IMR-90 (cell line): ENCODE measurements at regions of chr12 and their contacts with region 1.

Region 1: DNA sequence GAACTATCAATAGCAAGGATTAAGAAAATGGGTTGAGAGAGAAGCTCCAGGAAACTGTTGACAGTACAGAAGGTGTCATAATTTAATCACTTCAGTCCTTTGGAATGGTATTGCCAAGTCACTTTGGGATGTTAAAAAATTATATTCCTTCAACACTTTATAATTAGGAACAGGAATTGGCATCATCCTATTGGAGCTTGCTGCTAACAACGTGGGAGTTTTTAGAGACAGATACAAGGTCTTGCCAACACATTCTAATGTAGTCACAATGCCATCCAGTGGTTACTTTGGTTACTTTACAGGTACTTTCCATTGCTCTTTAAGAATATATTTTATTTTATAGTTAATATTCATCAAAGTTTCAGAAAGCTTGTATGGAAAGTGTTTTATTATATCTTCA is 310.1 kb downstream of the SYT1 start:
- DNase-seq: peak; percentile 77
- ATAC-seq: peak; percentile 75; the same call in 1 of the 2 replicates
- H3K4me3 ChIP-seq: no peak overlapping the region
- H3K27ac ChIP-seq: no peak overlapping the region
- H3K4me1 ChIP-seq: no peaks in the 10 kb centered on the region
- H3K27me3 ChIP-seq: no peaks in the 10 kb centered on the region
- CTCF ChIP-seq: peak; percentile 61
- POLR2A ChIP-seq: no peak
- RAD21 ChIP-seq: peak; percentile 68

Region 2: DNA sequence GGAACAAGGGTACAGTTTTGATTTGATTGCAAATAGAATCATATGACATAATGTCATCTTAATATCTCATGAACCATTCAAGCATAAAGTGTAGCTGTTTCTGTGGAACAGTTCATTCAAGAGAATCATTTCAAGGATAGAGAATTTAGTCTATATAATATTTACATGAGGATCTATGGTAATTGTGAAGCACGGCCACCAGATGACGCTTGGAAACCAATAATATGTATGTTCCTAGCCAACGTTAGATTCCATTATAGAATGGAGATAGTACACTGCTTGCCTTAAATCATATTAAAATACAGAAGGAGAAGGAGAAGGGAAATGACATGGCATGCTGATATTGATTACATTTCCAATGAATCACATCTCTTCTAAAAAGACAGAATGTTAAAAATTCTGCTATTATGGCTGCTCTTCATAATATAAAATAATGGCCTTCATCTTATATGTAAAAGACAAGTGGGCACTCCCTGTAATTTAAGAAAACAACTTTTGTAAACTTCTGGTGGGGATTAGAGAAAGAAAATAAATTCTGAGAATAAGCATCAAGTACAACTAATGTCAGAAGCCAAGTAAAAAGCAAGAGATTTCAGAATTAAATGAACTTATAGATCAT is 993.0 kb before region 1 on chr12:
- CTCF ChIA-PET with region 1: no interaction called
- POLR2A ChIA-PET with region 1: no interaction called
- dilution Hi-C with region 1: no loop called
- in situ Hi-C with region 1: loop called (anchors 10 kb)
- intact Hi-C with region 1: loop called (anchors 1 kb)
- DNase-seq: peak; percentile 48
- ATAC-seq: peak; percentile 63
- H3K4me3 ChIP-seq: no peak overlapping the region
- H3K27ac ChIP-seq: no peak overlapping the region
- H3K4me1 ChIP-seq: peaks cover 6% of the 10 kb centered on the region; the same call in 1 of the 2 replicates
- H3K27me3 ChIP-seq: no peaks in the 10 kb centered on the region
- CTCF ChIP-seq: peak; percentile 68
- POLR2A ChIP-seq: no peak
- RAD21 ChIP-seq: peak; percentile 69

Region 3: DNA sequence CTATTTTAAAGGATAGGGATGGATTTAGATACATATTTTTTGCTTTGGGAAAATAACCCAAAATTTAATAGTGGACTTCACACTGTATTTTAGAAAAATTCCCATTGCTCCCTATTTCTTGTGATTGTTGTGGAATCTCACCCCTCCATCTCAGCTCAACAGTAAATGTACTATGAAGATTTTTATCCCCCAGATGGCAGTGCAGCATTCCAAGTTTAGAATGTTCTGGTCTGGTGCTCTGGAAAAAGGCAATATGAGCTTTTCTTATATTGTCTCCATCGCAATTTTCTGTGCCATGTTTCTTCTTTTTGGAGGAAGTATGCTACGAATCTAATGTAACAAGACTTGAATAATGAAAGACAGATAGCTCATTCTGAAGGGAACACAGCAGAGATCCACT is 781.7 kb before region 1 on chr12:
- CTCF ChIA-PET with region 1: interaction called, 9 read pairs
- POLR2A ChIA-PET with region 1: no interaction called
- dilution Hi-C with region 1: no loop called
- in situ Hi-C with region 1: no loop called
- intact Hi-C with region 1: loop called (anchors 1 kb)
- DNase-seq: peak; percentile 30
- ATAC-seq: peak; percentile 63; the same call in 1 of the 2 replicates
- H3K4me3 ChIP-seq: no peak overlapping the region
- H3K27ac ChIP-seq: no peak overlapping the region
- H3K4me1 ChIP-seq: no peaks in the 10 kb centered on the region
- H3K27me3 ChIP-seq: no peaks in the 10 kb centered on the region; the same call in 1 of the 2 replicates
- CTCF ChIP-seq: peak; percentile 40
- POLR2A ChIP-seq: no peak
- RAD21 ChIP-seq: peak; percentile 53

Region 4: DNA sequence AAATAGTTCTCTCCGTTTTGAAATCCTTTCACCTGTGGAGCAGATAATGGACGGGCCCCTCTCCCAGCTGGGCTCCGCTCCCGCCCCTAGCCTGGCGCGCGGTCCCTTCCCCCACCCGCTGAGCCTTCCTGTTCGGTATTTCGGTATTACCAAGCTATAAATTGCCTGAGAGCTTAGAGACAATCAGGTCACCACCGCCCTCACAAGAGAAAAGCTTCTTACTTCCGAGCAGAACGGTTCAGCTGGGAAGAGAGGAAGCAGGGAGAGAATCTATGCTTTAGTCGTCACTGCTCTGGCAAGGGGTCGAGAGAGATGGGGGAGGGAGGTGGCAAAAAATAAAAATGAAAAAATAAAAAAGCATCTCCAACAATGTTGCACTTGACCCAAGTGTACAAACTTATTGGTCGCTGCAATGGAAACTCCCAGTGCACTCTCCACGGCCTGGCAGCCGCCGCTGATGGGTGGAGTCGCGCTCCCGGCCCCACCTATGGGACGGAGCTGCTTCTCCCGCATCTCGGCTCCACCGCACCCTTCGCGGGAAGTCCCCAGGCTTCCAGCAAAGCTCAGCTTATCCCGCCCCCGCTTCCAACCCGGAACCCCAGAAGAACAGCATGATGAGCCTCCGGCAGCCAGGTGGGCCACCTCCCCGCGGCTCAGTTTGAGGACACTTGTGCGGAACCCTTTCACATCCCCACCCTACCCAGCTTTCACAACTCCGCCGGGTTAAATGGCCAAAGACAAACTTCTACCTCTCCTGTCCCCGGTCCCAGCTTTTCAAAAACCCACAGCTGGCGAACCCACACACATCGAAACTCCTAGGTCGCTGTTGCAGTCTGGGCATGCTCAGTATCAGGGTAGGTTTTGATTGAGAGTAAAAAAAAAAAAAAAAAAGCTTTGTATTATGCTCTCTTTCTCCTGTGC is 310.9 kb before region 1 on chr12:
- CTCF ChIA-PET with region 1: no interaction called
- POLR2A ChIA-PET with region 1: no interaction called
- dilution Hi-C with region 1: no loop called
- in situ Hi-C with region 1: no loop called
- intact Hi-C with region 1: loop called (anchors 5 kb)
- DNase-seq: peak; percentile 39
- ATAC-seq: peak; percentile 63
- H3K4me3 ChIP-seq: peak overlapping the region; percentile 57
- H3K27ac ChIP-seq: peak overlapping the region; percentile 5; the same call in 1 of the 2 replicates
- H3K4me1 ChIP-seq: no peaks in the 10 kb centered on the region
- H3K27me3 ChIP-seq: no peaks in the 10 kb centered on the region; the same call in 1 of the 2 replicates
- CTCF ChIP-seq: no peak
- POLR2A ChIP-seq: no peak
- RAD21 ChIP-seq: no peak

Region 5: DNA sequence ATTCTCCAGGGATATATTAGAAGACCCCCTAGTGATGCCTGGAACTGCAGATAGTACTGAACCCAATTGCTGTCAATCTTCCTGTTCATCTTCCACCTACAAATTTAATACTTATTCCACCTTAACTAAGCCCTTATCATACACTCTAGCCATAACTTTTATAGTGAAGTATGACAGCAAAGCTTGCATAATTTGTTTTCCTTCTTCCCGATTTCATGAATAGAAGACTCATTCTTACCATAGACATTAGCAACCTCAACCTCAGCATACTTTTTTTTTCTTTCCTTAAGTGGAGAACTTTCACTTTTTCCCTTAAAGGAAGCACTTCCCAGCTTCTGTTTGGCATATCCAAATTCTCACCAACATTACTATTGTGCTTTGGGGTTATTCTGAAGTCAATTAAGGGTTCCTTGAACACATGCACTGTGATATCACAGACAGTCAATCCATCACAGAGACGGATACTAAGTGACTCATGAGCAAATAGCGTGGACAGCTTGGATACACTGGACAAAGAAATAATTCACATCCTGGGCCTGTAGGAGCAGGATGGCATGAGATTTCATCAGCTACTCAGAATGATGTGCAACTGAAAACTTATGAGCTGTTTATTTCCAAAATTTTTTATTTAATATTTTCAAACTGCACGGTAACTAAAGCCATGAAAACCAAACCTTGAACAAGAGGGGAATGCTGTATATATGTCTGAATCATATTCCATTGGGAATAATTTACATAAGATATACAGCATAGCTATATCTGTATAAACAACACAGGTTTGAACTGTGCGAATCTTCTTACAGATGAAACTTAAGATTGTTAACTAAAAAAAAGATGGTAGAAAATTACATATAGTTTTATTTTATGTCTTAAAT is 246.2 kb before region 1 on chr12:
- CTCF ChIA-PET with region 1: no interaction called
- POLR2A ChIA-PET with region 1: no interaction called
- dilution Hi-C with region 1: no loop called
- in situ Hi-C with region 1: no loop called
- intact Hi-C with region 1: no loop called
- DNase-seq: peak; percentile 93
- ATAC-seq: peak; percentile 87
- H3K4me3 ChIP-seq: peak overlapping the region; percentile 10; the same call in 1 of the 2 replicates
- H3K27ac ChIP-seq: peak overlapping the region; percentile 40; the same call in 1 of the 2 replicates
- H3K4me1 ChIP-seq: peaks cover 3% of the 10 kb centered on the region
- H3K27me3 ChIP-seq: no peaks in the 10 kb centered on the region
- CTCF ChIP-seq: no peak
- POLR2A ChIP-seq: no peak
- RAD21 ChIP-seq: no peak

Region 6: DNA sequence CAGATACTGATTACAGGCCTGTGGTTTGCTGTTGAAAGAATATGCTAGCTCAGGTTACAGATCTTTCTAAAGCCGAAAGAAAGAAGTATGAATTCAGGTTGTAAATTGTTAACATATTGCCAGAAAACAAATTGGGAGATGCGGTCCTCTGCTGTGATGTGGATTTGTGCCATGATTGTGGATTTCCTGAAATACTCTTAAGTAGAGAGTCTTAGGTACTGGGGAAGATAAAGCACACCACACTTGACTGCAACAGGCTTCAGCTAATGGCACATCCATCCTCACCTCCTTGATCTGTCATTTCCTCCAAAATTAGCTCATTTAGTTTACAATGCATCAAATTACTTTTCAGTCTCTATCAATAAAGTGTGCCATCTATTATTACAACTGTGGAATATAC is 30.8 kb before region 1 on chr12:
- CTCF ChIA-PET with region 1: no interaction called
- POLR2A ChIA-PET with region 1: no interaction called
- dilution Hi-C with region 1: no loop called
- in situ Hi-C with region 1: no loop called
- intact Hi-C with region 1: no loop called
- DNase-seq: no peak
- ATAC-seq: no peak
- H3K4me3 ChIP-seq: no peak overlapping the region
- H3K27ac ChIP-seq: no peak overlapping the region
- H3K4me1 ChIP-seq: no peaks in the 10 kb centered on the region
- H3K27me3 ChIP-seq: no peaks in the 10 kb centered on the region
- CTCF ChIP-seq: no peak
- POLR2A ChIP-seq: no peak
- RAD21 ChIP-seq: no peak

Region 7: GRCh38 chr12:79388011-79388410 is 213.4 kb after region 1 on chr12:
- CTCF ChIA-PET with region 1: no interaction called
- POLR2A ChIA-PET with region 1: no interaction called
- dilution Hi-C with region 1: no loop called
- in situ Hi-C with region 1: no loop called
- intact Hi-C with region 1: no loop called
- DNase-seq: no peak
- ATAC-seq: no peak
- H3K4me3 ChIP-seq: no peak overlapping the region
- H3K27ac ChIP-seq: no peak overlapping the region
- H3K4me1 ChIP-seq: 0 out of 2 replicates have a peak, but pooled peaks cover 2% of the 10 kb centered on the region
- H3K27me3 ChIP-seq: no peaks in the 10 kb centered on the region
- CTCF ChIP-seq: no peak
- POLR2A ChIP-seq: no peak
- RAD21 ChIP-seq: no peak